ENCODE measurements at regions of chr16 and their contacts with region 1.

Region 1: DNA sequence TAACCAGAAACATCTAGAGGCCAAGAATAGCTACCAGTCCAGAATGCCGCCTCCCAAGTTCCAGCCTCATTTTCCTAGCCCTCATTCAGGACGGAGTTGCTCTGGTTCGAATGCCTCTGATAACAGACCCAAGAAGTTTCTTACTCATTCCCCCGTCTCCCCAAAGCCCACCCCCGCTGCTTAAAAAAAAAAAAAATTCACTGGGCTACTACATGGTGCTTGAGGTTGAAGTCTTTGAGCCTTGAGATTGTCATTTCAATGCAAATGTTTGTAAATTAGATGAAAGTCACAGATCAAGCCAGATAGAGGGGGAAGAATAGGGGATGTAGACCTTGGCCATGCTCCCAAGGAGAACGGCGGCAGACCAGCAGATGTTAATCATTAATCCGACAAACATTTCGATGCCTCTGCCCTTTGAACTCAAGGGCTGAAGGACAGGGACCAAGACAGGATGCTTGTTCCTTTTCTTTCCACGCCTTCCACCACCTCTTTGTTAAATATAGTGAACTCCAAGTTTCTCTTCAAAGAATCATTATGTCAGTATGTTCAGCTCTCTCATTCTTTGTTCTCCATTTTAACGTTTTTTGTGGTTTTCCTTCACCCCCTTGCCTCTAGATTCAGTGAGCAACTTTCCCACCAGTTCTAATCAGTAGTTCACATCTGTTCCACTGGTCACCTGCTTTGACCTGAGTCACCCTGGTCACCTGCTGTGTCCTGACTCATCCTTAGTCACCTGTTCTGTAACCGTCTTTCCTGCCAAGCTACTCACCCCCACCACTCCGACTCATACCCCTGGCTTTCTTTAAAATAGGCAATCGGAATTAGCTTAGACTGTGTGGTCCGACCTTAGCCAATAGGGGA is 190.3 kb downstream of the CPPED1 start:
- DNase-seq: no peak
- H3K4me3 Mint-ChIP-seq: no peak overlapping the region
- H3K27ac Mint-ChIP-seq: peak overlapping the region; percentile 61
- H3K4me1 Mint-ChIP-seq: peaks cover 35% of the 10 kb centered on the region
- H3K27me3 Mint-ChIP-seq: peaks cover 6% of the 10 kb centered on the region

Region 2: GRCh38 chr16:12646490-12647274 is 33.3 kb after region 1 on chr16:
- intact Hi-C with region 1: loop called (anchors 2 kb)
- DNase-seq: peak; percentile 26
- H3K4me3 Mint-ChIP-seq: peak overlapping the region; percentile 38
- H3K27ac Mint-ChIP-seq: peak overlapping the region; percentile 94
- H3K4me1 Mint-ChIP-seq: peaks cover 26% of the 10 kb centered on the region
- H3K27me3 Mint-ChIP-seq: no peaks in the 10 kb centered on the region

Measured in activated T-helper 1 cell treated with anti-CD3 and anti-CD28 coated beads, Interleukin-12 subunit alpha, Interleukin-12 subunit beta, Interleukin-2, Interleukin-4 antibody, amounts not matched to agents 30 ng/mL and 10 ng/mL and 1 ng/mL, durations not matched to agents 14 hours and 24 hours and 36 hours (primary cell).